ENCODE measurements at regions of chr20 and their contacts with region 1.

Region 1: DNA sequence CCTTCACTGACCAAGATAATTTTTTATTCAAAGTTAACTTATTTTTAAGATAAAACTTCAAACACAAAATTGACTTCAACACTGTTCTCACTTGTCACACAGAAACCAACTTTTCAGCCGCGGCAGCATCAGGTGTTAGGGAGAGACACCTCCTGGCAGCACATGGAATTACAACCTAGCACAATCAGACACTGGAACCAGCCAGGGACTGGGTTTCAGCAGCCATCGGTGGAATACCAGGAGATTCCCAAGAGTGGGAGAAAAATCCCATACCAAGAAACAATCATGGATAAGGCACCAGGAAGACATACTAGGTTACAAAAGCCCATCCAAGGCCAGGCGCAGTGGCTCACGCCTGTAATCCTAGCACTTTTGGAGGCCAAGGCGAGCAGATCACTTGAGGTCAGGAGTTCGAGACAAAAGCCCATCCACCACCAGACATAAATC is 70.0 kb downstream of the SNX5 start:
- DNase-seq: peak; percentile 72
- ATAC-seq: peak; percentile 29; the same call in 1 of the 2 replicates
- H3K4me3 Mint-ChIP-seq: no peak overlapping the region
- H3K27ac Mint-ChIP-seq: no peak overlapping the region
- H3K4me1 Mint-ChIP-seq: peaks cover 37% of the 10 kb centered on the region
- H3K27me3 Mint-ChIP-seq: no peaks in the 10 kb centered on the region; the same call in 1 of the 2 replicates
- CTCF ChIP-seq: peak; percentile 92

Region 2: GRCh38 chr20:17873410-17874270 is 24.9 kb before region 1 on chr20:
- CTCF ChIA-PET with region 1: interaction called, 13 read pairs
- POLR2A ChIA-PET with region 1: no interaction called
- DNase-seq: no peak
- ATAC-seq: peak; percentile 52
- H3K4me3 Mint-ChIP-seq: no peak overlapping the region; the same call in 1 of the 2 replicates
- H3K27ac Mint-ChIP-seq: no peak overlapping the region; the same call in 1 of the 2 replicates
- H3K4me1 Mint-ChIP-seq: peaks cover 78% of the 10 kb centered on the region
- H3K27me3 Mint-ChIP-seq: no peaks in the 10 kb centered on the region; the same call in 1 of the 2 replicates
- CTCF ChIP-seq: no peak

Region 3: DNA sequence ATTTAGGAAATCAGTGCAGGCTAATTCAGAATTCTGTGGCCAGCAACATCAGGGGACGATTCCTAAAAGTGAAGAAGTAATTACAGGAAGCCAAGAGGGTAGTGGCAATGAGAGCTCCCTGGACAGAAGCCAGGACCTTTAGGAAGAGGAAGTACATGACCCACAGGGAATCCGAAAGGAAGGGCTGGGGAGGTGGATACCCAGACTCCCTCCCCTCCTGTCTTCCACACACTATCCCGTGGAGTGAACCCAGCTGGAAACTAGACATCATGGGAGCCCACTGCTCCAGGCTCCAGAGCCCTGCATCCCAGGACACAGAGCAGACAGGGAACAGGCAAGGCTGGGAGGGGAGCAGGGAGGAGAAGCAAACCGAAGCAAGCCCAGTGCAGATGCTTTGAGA is 13.0 kb before region 1 on chr20:
- CTCF ChIA-PET with region 1: interaction called, 22 read pairs
- POLR2A ChIA-PET with region 1: interaction called, 3 read pairs
- DNase-seq: no peak
- ATAC-seq: no peak
- H3K4me3 Mint-ChIP-seq: no peak overlapping the region
- H3K27ac Mint-ChIP-seq: no peak overlapping the region
- H3K4me1 Mint-ChIP-seq: peaks cover 19% of the 10 kb centered on the region
- H3K27me3 Mint-ChIP-seq: no peaks in the 10 kb centered on the region; the same call in 1 of the 2 replicates
- CTCF ChIP-seq: no peak

Region 4: DNA sequence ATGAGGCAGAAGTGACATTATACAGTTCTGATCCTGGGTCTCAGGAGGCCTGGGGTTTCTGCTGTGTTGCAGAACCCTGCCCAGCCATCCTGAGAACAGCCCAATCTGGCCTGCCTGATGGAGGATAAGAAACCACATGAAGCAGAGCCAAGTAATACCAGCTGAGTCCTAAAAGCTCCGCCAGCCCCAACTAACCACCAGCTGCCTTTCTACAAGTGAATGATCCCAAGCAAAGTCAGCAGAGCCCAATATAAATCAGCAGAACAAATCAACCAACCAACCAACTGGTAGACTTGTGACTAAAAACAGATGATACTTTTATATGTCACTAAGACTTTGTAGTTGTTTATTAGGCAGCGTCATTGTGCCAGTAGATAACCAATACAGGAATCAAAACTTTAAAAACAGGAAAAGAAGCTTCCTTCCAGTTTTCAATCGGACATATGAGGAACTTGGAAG is 17.9 kb after region 1 on chr20:
- CTCF ChIA-PET with region 1: no interaction called
- POLR2A ChIA-PET with region 1: no interaction called
- DNase-seq: no peak
- ATAC-seq: no peak
- H3K4me3 Mint-ChIP-seq: no peak overlapping the region
- H3K27ac Mint-ChIP-seq: no peak overlapping the region
- H3K4me1 Mint-ChIP-seq: no peaks in the 10 kb centered on the region
- H3K27me3 Mint-ChIP-seq: no peaks in the 10 kb centered on the region
- CTCF ChIP-seq: no peak

Measured in WTC11 (cell line).